ENCODE measurements at regions of chr12 and their contacts with region 1.

Region 1: GRCh38 chr12:47340411-47341015 is 260.8 kb upstream of the AMIGO2 start:
- DNase-seq: no peak
- ATAC-seq: no peak
- H3K4me3 Mint-ChIP-seq: no peak overlapping the region
- H3K27ac Mint-ChIP-seq: no peak overlapping the region
- H3K4me1 Mint-ChIP-seq: peaks cover 9% of the 10 kb centered on the region
- H3K27me3 Mint-ChIP-seq: no peaks in the 10 kb centered on the region
- CTCF ChIP-seq: no peak

Region 2: GRCh38 chr12:47328831-47329545 is 11.5 kb before region 1 on chr12:
- CTCF ChIA-PET with region 1: no interaction called
- POLR2A ChIA-PET with region 1: no interaction called
- intact Hi-C with region 1: loop called (anchors 1 kb)
- DNase-seq: no peak
- ATAC-seq: no peak
- H3K4me3 Mint-ChIP-seq: no peak overlapping the region
- H3K27ac Mint-ChIP-seq: no peak overlapping the region
- H3K4me1 Mint-ChIP-seq: peaks cover 14% of the 10 kb centered on the region
- H3K27me3 Mint-ChIP-seq: no peaks in the 10 kb centered on the region
- CTCF ChIP-seq: no peak

Region 3: GRCh38 chr12:47383942-47384341 is 43.4 kb after region 1 on chr12:
- CTCF ChIA-PET with region 1: no interaction called
- POLR2A ChIA-PET with region 1: no interaction called
- intact Hi-C with region 1: no loop called
- DNase-seq: no peak
- ATAC-seq: peak; percentile 18
- H3K4me3 Mint-ChIP-seq: peak overlapping the region; percentile 21
- H3K27ac Mint-ChIP-seq: peak overlapping the region; percentile 78
- H3K4me1 Mint-ChIP-seq: peaks cover 64% of the 10 kb centered on the region
- H3K27me3 Mint-ChIP-seq: no peaks in the 10 kb centered on the region
- CTCF ChIP-seq: no peak